K562 (cell line): ENCODE measurements at regions of chr1 and their contacts with region 1.

Region 1: GRCh38 chr1:119372490-119373086 is 4.0 kb downstream of the HAO2 start:
- DNase-seq: peak in 2 of 4 experiments; percentile 44 to 47
- ATAC-seq: peak; percentile 75
- H3K4me3 ChIP-seq: no peak overlapping the region
- H3K27ac ChIP-seq: no peak overlapping the region
- H3K4me1 ChIP-seq: no peaks in the 10 kb centered on the region
- H3K27me3 ChIP-seq: 0 out of 5 replicates have a peak, but pooled peaks cover 0 to 2% of the 10 kb centered on the region in 2 experiments
- CTCF ChIP-seq: peak; percentile 12 to 43 (median 39); a peak in 3 of 6 replicates
- EP300 ChIP-seq: no peak
- POLR2A ChIP-seq: no peak
- RAD21 ChIP-seq: peak in 1 of 2 experiments; percentile 42; a peak in 2 of 4 replicates

Region 2: GRCh38 chr1:119254067-119254720 is 118.4 kb before region 1 on chr1:
- CTCF ChIA-PET with region 1: no interaction called
- POLR2A ChIA-PET with region 1: no interaction called
- in situ Hi-C with region 1: no loop called
- intact Hi-C with region 1: no loop called
- DNase-seq: no peak
- ATAC-seq: no peak
- H3K4me3 ChIP-seq: no peak overlapping the region
- H3K27ac ChIP-seq: no peak overlapping the region
- H3K4me1 ChIP-seq: no peaks in the 10 kb centered on the region
- H3K27me3 ChIP-seq: no peaks in the 10 kb centered on the region
- CTCF ChIP-seq: no peak
- EP300 ChIP-seq: no peak
- POLR2A ChIP-seq: no peak
- RAD21 ChIP-seq: no peak

Region 3: DNA sequence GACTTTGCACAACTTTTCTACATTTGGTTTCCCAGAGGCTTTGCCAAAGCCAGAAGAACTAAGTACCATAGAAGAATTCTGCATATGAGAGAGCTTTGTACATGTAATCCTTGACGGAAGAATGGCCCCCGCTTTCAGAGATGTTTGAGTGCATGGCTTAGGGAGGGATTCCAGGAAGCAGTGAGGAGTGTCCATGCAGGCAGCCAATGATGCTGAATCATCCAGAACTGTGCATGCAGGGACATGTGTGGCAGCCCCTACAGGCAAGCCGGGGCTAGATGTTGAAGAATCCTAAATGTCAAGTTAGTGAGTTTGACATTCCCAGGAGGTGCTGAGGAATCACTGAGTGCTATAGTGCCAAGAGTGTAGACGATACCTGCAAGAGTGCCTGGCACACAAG is 14.0 kb before region 1 on chr1:
- CTCF ChIA-PET with region 1: no interaction called
- POLR2A ChIA-PET with region 1: no interaction called
- in situ Hi-C with region 1: no loop called
- intact Hi-C with region 1: no loop called
- DNase-seq: no peak
- ATAC-seq: no peak
- H3K4me3 ChIP-seq: no peak overlapping the region
- H3K27ac ChIP-seq: no peak overlapping the region
- H3K4me1 ChIP-seq: no peaks in the 10 kb centered on the region
- H3K27me3 ChIP-seq: no peaks in the 10 kb centered on the region
- CTCF ChIP-seq: no peak
- EP300 ChIP-seq: no peak
- POLR2A ChIP-seq: no peak
- RAD21 ChIP-seq: no peak

Region 4: GRCh38 chr1:119675349-119676345 is 303.1 kb after region 1 on chr1:
- CTCF ChIA-PET with region 1: no interaction called
- POLR2A ChIA-PET with region 1: no interaction called
- in situ Hi-C with region 1: no loop called
- intact Hi-C with region 1: loop called (anchors 5 kb)
- DNase-seq: peak; percentile 85 to 91 (median 86)
- ATAC-seq: peak; percentile 92
- H3K4me3 ChIP-seq: peak overlapping the region; percentile 28
- H3K27ac ChIP-seq: no peak overlapping the region
- H3K4me1 ChIP-seq: peaks cover 0 to 18% of the 10 kb centered on the region in 2 experiments; a peak in 3 of 5 replicates
- H3K27me3 ChIP-seq: no peaks in the 10 kb centered on the region
- CTCF ChIP-seq: peak; percentile 80 to 96 (median 90)
- EP300 ChIP-seq: no peak
- POLR2A ChIP-seq: no peak
- RAD21 ChIP-seq: peak; percentile 75 to 88